ENCODE measurements at regions of chr22 and their contacts with region 1.

Region 1: GRCh38 chr22:45441138-45441537 is 27.6 kb downstream of the RIBC2 start:
- DNase-seq: peak; percentile 44 to 56
- ATAC-seq: peak; percentile 86 to 93 (median 91)
- H3K4me3 ChIP-seq: no peak overlapping the region
- H3K27ac ChIP-seq: no peak overlapping the region
- H3K4me1 ChIP-seq: peaks cover 0 to 6% (median 0%) of the 10 kb centered on the region in 9 donors
- H3K27me3 ChIP-seq: peaks cover 0 to 24% (median 0%) of the 10 kb centered on the region in 7 donors
- CTCF ChIP-seq: peak; percentile 37 to 80 (median 65)

Region 2: DNA sequence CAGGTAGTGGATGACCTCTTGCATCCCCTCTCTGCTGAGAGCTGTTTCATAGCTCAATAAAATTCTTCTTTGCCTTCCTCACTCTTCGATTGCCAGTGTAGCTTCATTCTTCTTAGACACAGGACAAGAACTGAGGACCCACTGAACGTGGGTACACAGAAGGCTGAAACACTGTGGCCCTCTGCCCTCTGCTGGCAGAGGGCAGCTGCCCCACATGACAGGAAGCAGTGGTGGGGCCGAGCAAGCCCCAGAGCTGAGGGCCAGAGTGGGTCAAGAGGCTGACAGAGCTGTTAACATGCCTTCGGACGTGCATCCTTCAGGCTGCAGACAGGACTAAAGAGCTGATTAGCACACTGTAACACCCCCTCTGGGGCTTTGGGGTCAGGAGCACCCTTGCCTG is 43.3 kb before region 1 on chr22:
- intact Hi-C with region 1: no loop called
- DNase-seq: no peak
- ATAC-seq: no peak
- H3K4me3 ChIP-seq: no peak overlapping the region
- H3K27ac ChIP-seq: no peak overlapping the region
- H3K4me1 ChIP-seq: no peaks in the 10 kb centered on the region
- H3K27me3 ChIP-seq: peaks cover 0 to 13% (median 0%) of the 10 kb centered on the region in 7 donors
- CTCF ChIP-seq: peak in 5 of 9 donors; percentile 7 to 37 (median 12)

Region 3: GRCh38 chr22:45511847-45512281 is 70.7 kb after region 1 on chr22:
- intact Hi-C with region 1: loop called in 1 of 10 experiments (anchors 10 kb)
- DNase-seq: peak; percentile 62 to 73
- ATAC-seq: peak; percentile 79 to 92 (median 86)
- H3K4me3 ChIP-seq: no peak overlapping the region
- H3K27ac ChIP-seq: peak overlapping the region; percentile 35 to 79 (median 58)
- H3K4me1 ChIP-seq: peaks cover 3 to 68% (median 29%) of the 10 kb centered on the region in 9 donors
- H3K27me3 ChIP-seq: peaks cover 0 to under 1% (median 0%) of the 10 kb centered on the region in 7 donors
- CTCF ChIP-seq: no peak

Measured in heart right ventricle (tissue), 16 donors.